ENCODE measurements at regions of chr6 and their contacts with region 1.

Region 1: DNA sequence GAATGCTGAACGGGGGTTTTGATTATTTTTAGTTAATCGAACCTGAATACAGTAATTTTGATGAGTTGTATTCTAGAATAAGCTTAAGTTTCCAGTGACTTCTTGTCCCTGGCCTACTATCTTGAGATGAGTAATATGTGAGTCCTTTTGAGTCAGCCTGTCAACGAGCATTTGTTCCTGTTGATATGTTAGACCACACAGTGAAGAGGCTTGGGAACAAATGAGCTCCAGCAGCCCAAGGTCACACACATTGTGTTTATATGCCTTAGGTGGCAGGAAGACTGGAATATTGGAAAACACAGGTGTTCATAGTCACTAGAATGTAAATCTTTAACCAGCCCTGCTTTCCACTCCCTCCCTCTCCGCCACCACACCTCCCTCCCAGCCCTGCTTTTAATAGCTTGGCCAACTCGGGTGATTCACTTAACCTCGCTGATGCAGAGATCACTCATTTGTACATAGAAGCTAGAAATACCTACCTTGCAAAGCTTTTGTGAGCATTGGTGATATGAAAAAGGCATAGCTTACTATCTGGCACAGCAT is 9.1 kb downstream of the SMPDL3A start:
- DNase-seq: peak; percentile 11
- H3K4me3 Mint-ChIP-seq: no peak overlapping the region
- H3K27ac Mint-ChIP-seq: peak overlapping the region; percentile 69
- H3K4me1 Mint-ChIP-seq: peaks cover 13% of the 10 kb centered on the region
- H3K27me3 Mint-ChIP-seq: no peaks in the 10 kb centered on the region

Region 2: GRCh38 chr6:122751326-122751725 is 46.8 kb before region 1 on chr6:
- intact Hi-C with region 1: loop called (anchors 5 kb)
- DNase-seq: no peak
- H3K4me3 Mint-ChIP-seq: no peak overlapping the region
- H3K27ac Mint-ChIP-seq: peak overlapping the region; percentile 34
- H3K4me1 Mint-ChIP-seq: peaks cover 19% of the 10 kb centered on the region
- H3K27me3 Mint-ChIP-seq: no peaks in the 10 kb centered on the region

Measured in activated T-helper 2 cell treated with anti-CD3 and anti-CD28 coated beads, Interferon-gamma antibody, Interleukin-2, Interleukin-4, amounts not matched to agents 10 μg/mL and 5 μg/mL and 100 μg/mL, durations not matched to agents 14 hours and 24 hours and 36 hours (primary cell).